Panc1 (cell line): ENCODE measurements at regions of chr10 and their contacts with region 1.

Region 1: DNA sequence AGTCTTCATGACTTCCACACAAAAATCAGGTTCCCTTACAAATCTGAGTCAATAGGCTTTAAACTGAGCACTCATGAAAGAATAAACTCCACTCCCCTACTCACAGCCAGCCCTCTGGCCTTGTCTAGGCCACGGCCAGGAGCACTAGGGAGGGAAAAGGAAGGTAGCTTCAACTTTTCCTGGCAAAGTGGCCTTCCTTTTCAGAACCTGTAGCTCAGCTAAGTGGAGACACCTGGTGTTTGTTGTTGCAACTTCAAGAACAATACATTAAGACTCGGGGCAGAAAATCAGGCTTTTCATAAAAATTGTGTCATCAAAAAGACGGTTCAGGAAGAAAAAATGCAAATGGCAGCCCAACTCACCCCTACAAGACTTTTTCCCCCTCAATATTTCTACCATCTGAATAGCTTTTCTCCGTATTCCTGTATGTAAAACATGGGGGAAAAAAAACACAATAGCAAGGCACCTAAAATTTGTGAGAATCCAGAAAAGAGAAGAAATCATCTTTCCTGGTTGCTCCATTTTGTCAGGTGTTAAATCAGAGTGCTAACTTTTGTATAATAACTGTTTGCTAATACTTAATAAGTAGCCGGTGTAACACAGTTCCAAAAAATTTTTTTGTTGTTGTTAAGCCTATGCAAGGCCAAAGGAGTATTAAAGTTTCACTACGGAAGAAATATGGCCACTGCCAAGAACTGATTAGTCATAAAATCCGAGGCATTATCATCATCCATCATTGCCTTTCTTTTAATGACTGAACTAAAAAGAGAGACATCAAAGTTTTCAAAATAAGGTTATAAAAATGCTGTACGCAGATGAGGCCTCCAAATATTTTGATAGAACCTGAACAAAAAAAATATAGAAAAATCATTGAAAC is 66.2 kb upstream of the ARID5B start:
- DNase-seq: no peak
- ATAC-seq: 0 out of 2 replicates have a peak, but pooled peaks have one; percentile 12
- H3K4me3 ChIP-seq: no peak overlapping the region
- H3K27ac ChIP-seq: peak overlapping the region; percentile 99
- H3K4me1 ChIP-seq: peaks cover 38% of the 10 kb centered on the region
- H3K27me3 ChIP-seq: no peaks in the 10 kb centered on the region
- CTCF ChIP-seq: peak; percentile 80

Region 2: GRCh38 chr10:60816628-60817397 is 1018.5 kb before region 1 on chr10:
- CTCF ChIA-PET with region 1: no interaction called
- POLR2A ChIA-PET with region 1: no interaction called
- in situ Hi-C with region 1: no loop called
- intact Hi-C with region 1: loop called (anchors 5 kb)
- DNase-seq: peak; percentile 72
- ATAC-seq: peak; percentile 90
- H3K4me3 ChIP-seq: no peak overlapping the region
- H3K27ac ChIP-seq: peak overlapping the region; percentile 44; the same call in 1 of the 2 replicates
- H3K4me1 ChIP-seq: peaks cover 3% of the 10 kb centered on the region; the same call in 1 of the 2 replicates
- H3K27me3 ChIP-seq: no peaks in the 10 kb centered on the region
- CTCF ChIP-seq: peak; percentile 80; the same call in 1 of the 2 replicates

Region 3: DNA sequence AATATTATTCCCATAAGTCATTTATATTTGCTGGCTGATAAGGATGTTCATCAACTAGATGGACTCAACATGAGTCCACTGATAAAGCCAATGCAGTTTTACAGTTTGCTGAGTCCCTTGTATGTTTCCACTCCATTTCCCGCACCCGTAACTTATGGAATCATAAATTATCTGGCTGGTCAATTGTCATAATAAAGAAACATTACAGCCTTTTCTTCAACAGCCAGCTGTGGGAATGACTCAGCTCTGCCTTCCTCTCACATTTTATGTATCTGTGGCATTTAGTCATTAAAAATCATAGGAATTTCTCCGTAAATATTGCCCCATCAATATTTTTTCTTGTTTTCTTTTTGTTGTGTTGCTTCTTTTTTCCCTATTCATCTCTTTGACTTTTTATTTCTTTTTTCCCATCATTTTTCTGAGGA is 359.8 kb before region 1 on chr10:
- CTCF ChIA-PET with region 1: no interaction called
- POLR2A ChIA-PET with region 1: no interaction called
- in situ Hi-C with region 1: no loop called
- intact Hi-C with region 1: loop called (anchors 10 kb)
- DNase-seq: no peak
- ATAC-seq: 0 out of 2 replicates have a peak, but pooled peaks have one; percentile 53
- H3K4me3 ChIP-seq: no peak overlapping the region
- H3K27ac ChIP-seq: peak overlapping the region; percentile 49; the same call in 1 of the 2 replicates
- H3K4me1 ChIP-seq: peaks cover 6% of the 10 kb centered on the region; the same call in 1 of the 2 replicates
- H3K27me3 ChIP-seq: no peaks in the 10 kb centered on the region
- CTCF ChIP-seq: no peak

Region 4: DNA sequence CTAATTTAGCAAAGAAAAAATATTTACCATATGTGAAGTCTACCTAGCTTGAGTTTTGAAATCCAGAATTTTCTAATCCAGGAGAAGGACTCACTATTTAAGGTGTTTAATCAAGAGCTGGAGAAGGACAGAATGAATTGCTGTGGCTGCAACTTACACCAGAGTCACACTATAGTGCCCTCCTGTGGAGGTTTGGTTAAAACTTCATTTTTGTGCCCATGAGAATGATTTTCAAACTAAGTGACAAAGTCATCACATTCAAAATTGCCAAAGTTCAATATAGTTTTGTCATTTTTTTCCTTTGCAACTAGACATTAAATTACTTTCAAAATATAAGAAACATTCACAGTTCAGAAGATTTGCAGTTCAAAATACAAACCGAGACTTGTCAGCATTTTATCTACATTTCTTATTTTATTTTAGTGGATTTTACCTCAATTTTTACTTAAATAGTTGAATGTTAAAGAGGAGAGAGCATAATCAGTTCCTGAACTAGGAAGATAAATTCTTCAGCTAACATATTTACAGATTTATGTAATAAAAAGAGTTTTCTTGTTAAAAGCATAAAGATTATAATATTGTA is 101.9 kb before region 1 on chr10:
- CTCF ChIA-PET with region 1: no interaction called
- POLR2A ChIA-PET with region 1: no interaction called
- in situ Hi-C with region 1: no loop called
- intact Hi-C with region 1: loop called (anchors 5 kb)
- DNase-seq: peak; percentile 46
- ATAC-seq: peak; percentile 78
- H3K4me3 ChIP-seq: no peak overlapping the region
- H3K27ac ChIP-seq: peak overlapping the region; percentile 74; the same call in 1 of the 2 replicates
- H3K4me1 ChIP-seq: no peaks in the 10 kb centered on the region
- H3K27me3 ChIP-seq: no peaks in the 10 kb centered on the region
- CTCF ChIP-seq: peak; percentile 80; the same call in 1 of the 2 replicates

Region 5: GRCh38 chr10:61896854-61897661 is 61.8 kb after region 1 on chr10:
- CTCF ChIA-PET with region 1: interaction called, 3 read pairs
- POLR2A ChIA-PET with region 1: no interaction called
- in situ Hi-C with region 1: no loop called
- intact Hi-C with region 1: loop called (anchors 1 kb)
- DNase-seq: peak; percentile 67
- ATAC-seq: peak; percentile 53
- H3K4me3 ChIP-seq: peak overlapping the region; percentile 19 to 64
- H3K27ac ChIP-seq: peak overlapping the region; percentile 100
- H3K4me1 ChIP-seq: peaks cover 41% of the 10 kb centered on the region
- H3K27me3 ChIP-seq: no peaks in the 10 kb centered on the region
- CTCF ChIP-seq: peak; percentile 88

Region 6: DNA sequence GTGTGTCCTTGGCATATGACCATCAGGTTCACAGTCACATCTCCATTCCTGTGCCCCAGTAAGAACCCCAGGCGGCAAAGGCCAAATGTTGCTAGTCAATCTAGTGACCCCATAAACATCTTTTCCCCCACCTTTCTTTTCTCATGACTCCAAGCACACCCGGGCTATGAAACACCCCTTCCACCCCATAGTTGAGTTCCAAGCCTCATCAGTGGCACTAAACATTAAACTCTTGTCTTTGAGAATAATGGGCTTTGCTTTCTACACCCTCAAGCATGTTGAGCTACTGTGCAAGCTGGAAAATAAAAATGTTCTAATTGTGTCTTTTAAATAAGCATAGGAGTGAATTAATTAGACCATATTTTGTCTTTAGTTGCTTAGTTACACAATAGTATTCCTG is 75.6 kb after region 1 on chr10:
- CTCF ChIA-PET with region 1: no interaction called
- POLR2A ChIA-PET with region 1: no interaction called
- in situ Hi-C with region 1: no loop called
- intact Hi-C with region 1: no loop called
- DNase-seq: no peak
- ATAC-seq: no peak
- H3K4me3 ChIP-seq: no peak overlapping the region
- H3K27ac ChIP-seq: peak overlapping the region; percentile 18
- H3K4me1 ChIP-seq: peaks cover 32% of the 10 kb centered on the region
- H3K27me3 ChIP-seq: no peaks in the 10 kb centered on the region
- CTCF ChIP-seq: no peak

Region 7: GRCh38 chr10:61961278-61961677 is 126.0 kb after region 1 on chr10:
- CTCF ChIA-PET with region 1: no interaction called
- POLR2A ChIA-PET with region 1: no interaction called
- in situ Hi-C with region 1: no loop called
- intact Hi-C with region 1: no loop called
- DNase-seq: no peak
- ATAC-seq: no peak
- H3K4me3 ChIP-seq: no peak overlapping the region
- H3K27ac ChIP-seq: no peak overlapping the region
- H3K4me1 ChIP-seq: peaks cover 7% of the 10 kb centered on the region; the same call in 1 of the 2 replicates
- H3K27me3 ChIP-seq: no peaks in the 10 kb centered on the region
- CTCF ChIP-seq: no peak

Region 8: GRCh38 chr10:62183442-62183841 is 348.1 kb after region 1 on chr10:
- CTCF ChIA-PET with region 1: no interaction called
- POLR2A ChIA-PET with region 1: no interaction called
- in situ Hi-C with region 1: no loop called
- intact Hi-C with region 1: no loop called
- DNase-seq: no peak
- ATAC-seq: peak; percentile 30; the same call in 1 of the 2 replicates
- H3K4me3 ChIP-seq: no peak overlapping the region
- H3K27ac ChIP-seq: peak overlapping the region; percentile 73; the same call in 1 of the 2 replicates
- H3K4me1 ChIP-seq: peaks cover 5% of the 10 kb centered on the region
- H3K27me3 ChIP-seq: no peaks in the 10 kb centered on the region
- CTCF ChIP-seq: no peak

Region 9: GRCh38 chr10:62669341-62669740 is 834.0 kb after region 1 on chr10:
- CTCF ChIA-PET with region 1: no interaction called
- POLR2A ChIA-PET with region 1: no interaction called
- in situ Hi-C with region 1: no loop called
- intact Hi-C with region 1: no loop called
- DNase-seq: no peak
- ATAC-seq: no peak
- H3K4me3 ChIP-seq: no peak overlapping the region
- H3K27ac ChIP-seq: no peak overlapping the region
- H3K4me1 ChIP-seq: no peaks in the 10 kb centered on the region
- H3K27me3 ChIP-seq: peaks cover 6% of the 10 kb centered on the region; the same call in 1 of the 2 replicates
- CTCF ChIP-seq: no peak